ENCODE measurements at regions of chr4 and their contacts with region 1.

Region 1: GRCh38 chr4:38179690-38180377 is 219.6 kb downstream of the PTTG2 start:
- DNase-seq: peak; percentile 92
- H3K4me3 Mint-ChIP-seq: no peak overlapping the region
- H3K27ac Mint-ChIP-seq: no peak overlapping the region
- H3K4me1 Mint-ChIP-seq: peaks cover 30% of the 10 kb centered on the region
- H3K27me3 Mint-ChIP-seq: peaks cover 17% of the 10 kb centered on the region

Region 2: GRCh38 chr4:38062088-38062893 is 117.5 kb before region 1 on chr4:
- intact Hi-C with region 1: loop called (anchors 1 kb)
- DNase-seq: peak; percentile 88
- H3K4me3 Mint-ChIP-seq: peak overlapping the region; percentile 88
- H3K27ac Mint-ChIP-seq: peak overlapping the region; percentile 69
- H3K4me1 Mint-ChIP-seq: peaks cover 12% of the 10 kb centered on the region
- H3K27me3 Mint-ChIP-seq: no peaks in the 10 kb centered on the region

Region 3: DNA sequence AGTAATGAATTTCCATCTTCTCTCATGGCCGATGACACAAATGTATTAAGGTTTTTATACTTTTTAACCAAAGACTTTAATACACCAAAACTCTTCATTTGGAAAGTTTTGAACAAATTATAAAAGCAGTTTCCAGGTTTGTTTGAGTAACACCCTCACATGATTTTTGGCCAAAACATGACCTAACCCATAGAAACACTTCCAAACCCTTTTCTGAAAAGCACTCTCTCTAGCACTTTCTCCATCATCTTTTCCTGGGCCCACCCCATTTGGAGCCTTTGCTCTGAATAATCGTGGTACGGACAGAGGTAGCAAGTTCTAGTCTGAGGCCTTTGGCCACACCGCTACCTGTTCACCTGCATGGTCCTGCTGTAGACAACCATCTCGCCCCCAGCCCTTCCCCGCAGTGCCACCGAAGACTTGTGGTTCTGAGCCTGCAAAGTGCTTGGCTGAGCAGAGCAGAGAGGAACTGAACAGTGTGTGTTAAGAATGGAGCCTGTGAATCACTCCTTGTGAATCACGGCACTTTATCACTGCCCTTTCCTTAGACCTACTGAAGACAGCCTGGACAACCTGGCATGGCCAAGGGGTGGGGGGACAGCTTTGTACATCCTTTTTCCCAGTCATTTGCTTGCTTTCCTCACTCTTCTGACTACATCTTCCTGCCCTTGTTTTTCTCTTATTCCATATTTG is 37.9 kb before region 1 on chr4:
- intact Hi-C with region 1: no loop called
- DNase-seq: no peak
- H3K4me3 Mint-ChIP-seq: no peak overlapping the region
- H3K27ac Mint-ChIP-seq: no peak overlapping the region
- H3K4me1 Mint-ChIP-seq: peaks cover 7% of the 10 kb centered on the region
- H3K27me3 Mint-ChIP-seq: no peaks in the 10 kb centered on the region

Region 4: DNA sequence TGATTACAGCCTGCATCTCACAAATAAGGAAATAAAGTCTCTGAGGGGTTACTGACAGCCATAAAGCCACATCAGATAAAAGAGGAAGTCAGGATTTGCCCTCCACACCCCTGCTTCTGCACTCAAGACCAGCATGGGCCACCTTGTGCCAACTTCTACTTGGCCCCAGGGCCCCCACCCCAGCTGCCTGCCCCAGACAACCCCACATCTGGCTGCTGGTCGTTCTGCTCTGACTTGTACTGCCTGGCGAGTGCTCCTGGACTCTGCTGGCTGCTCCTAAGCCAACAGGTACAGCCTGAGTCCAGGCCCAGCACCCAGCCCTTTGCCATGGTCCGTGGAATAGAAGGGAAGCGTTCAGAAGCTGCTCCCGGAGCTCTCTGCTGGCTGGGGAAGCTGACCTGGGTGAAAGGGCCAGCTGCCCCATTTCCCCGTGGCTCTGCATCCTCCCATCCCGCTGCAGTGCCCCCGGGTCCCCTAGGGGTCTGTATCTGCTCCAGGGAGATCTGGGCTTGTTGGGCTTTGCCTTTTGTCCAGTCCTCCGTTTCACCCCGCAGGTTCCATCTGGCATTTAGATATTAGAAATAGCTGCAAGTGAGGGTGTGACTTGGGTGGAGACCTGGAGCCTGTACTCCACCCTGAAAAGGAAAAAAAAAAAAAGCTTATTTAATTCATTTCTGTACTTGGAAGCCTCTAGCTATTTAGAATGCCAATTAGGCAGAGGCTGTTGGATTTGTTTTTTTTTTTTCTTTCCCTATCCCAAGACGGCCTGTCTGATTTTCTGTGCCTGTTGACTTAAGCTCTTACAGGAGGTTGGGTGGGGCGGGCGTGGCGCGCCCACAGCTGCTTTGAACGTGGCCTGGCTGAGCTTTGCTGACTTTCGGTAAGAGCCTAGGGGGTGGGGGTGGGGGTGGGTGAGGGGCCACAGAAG is 24.9 kb before region 1 on chr4:
- intact Hi-C with region 1: no loop called
- DNase-seq: peak; percentile 69
- H3K4me3 Mint-ChIP-seq: peak overlapping the region; percentile 20
- H3K27ac Mint-ChIP-seq: no peak overlapping the region
- H3K4me1 Mint-ChIP-seq: peaks cover 33% of the 10 kb centered on the region
- H3K27me3 Mint-ChIP-seq: peaks cover 10% of the 10 kb centered on the region

Region 5: GRCh38 chr4:38675146-38676121 is 495.6 kb after region 1 on chr4:
- intact Hi-C with region 1: loop called (anchors 1 kb)
- DNase-seq: peak; percentile 94
- H3K4me3 Mint-ChIP-seq: no peak overlapping the region
- H3K27ac Mint-ChIP-seq: no peak overlapping the region
- H3K4me1 Mint-ChIP-seq: peaks cover 57% of the 10 kb centered on the region
- H3K27me3 Mint-ChIP-seq: peaks cover 9% of the 10 kb centered on the region

Measured in activated CD4-positive, alpha-beta T cell treated with anti-CD3 and anti-CD28 coated beads, Interleukin-2, amount 10 ng/mL, durations not matched to agents 24 days and 14 days (primary cell).